Thyroid gland (tissue), 4 donors: ENCODE measurements at regions of chr20 and their contacts with region 1.

Region 1: DNA sequence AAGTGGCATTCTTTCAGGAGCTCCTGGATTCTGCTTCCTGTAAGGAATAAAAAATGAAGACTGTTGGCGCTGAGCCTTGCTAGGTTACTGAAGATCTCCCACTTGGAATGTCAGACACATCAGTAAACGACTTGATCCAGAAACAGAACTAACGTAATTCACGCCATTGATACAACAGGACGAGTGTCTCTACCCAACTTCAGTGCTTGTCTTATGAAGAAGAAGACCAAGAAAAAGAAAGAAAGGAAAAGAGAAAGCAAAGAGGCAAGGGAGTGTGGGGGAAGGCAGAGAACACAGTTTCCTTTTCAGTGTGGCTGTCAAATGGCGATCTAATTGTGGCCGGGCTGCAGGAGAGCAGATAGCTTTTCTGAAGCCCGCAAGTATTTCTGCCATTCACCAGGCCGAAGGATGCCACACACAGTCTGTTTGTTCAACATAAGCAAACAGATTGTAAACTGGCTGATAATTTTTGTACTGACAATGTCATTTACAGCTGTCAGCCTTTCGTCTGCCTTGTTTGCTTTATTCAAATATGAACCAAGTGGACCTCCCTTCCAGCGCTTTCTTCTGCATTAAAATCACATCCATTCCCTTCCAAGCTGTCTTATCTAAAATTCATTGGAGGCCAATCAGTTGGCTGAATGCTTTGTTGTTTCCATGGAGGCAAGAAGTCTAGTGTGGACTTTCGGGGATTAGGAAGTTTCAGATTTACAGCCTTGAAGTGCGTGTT is 180.6 kb downstream of the FOXA2 start:
- DNase-seq: no peak
- H3K4me3 ChIP-seq: no peak overlapping the region
- H3K27ac ChIP-seq: no peak overlapping the region
- H3K4me1 ChIP-seq: peaks cover 7 to 12% of the 10 kb centered on the region in 2 donors
- H3K27me3 ChIP-seq: no peaks in the 10 kb centered on the region
- CTCF ChIP-seq: no peak
- POLR2A ChIP-seq: no peak

Region 2: GRCh38 chr20:22004946-22005345 is 398.9 kb before region 1 on chr20:
- intact Hi-C with region 1: no loop called
- DNase-seq: no peak
- H3K4me3 ChIP-seq: no peak overlapping the region
- H3K27ac ChIP-seq: no peak overlapping the region
- H3K4me1 ChIP-seq: no peaks in the 10 kb centered on the region
- H3K27me3 ChIP-seq: no peaks in the 10 kb centered on the region
- CTCF ChIP-seq: no peak
- POLR2A ChIP-seq: no peak

Region 3: GRCh38 chr20:22462975-22463914 is 59.4 kb after region 1 on chr20:
- intact Hi-C with region 1: loop called (anchors 10 kb)
- DNase-seq: no peak
- H3K4me3 ChIP-seq: no peak overlapping the region
- H3K27ac ChIP-seq: no peak overlapping the region
- H3K4me1 ChIP-seq: no peaks in the 10 kb centered on the region
- H3K27me3 ChIP-seq: no peaks in the 10 kb centered on the region
- CTCF ChIP-seq: no peak
- POLR2A ChIP-seq: no peak

Region 4: GRCh38 chr20:22475662-22476061 is 71.9 kb after region 1 on chr20:
- intact Hi-C with region 1: no loop called
- DNase-seq: no peak
- H3K4me3 ChIP-seq: no peak overlapping the region
- H3K27ac ChIP-seq: no peak overlapping the region
- H3K4me1 ChIP-seq: no peaks in the 10 kb centered on the region
- H3K27me3 ChIP-seq: no peaks in the 10 kb centered on the region
- CTCF ChIP-seq: no peak
- POLR2A ChIP-seq: no peak